Caco-2 (cell line): ENCODE measurements at regions of chr11 and their contacts with region 1.

Region 1: DNA sequence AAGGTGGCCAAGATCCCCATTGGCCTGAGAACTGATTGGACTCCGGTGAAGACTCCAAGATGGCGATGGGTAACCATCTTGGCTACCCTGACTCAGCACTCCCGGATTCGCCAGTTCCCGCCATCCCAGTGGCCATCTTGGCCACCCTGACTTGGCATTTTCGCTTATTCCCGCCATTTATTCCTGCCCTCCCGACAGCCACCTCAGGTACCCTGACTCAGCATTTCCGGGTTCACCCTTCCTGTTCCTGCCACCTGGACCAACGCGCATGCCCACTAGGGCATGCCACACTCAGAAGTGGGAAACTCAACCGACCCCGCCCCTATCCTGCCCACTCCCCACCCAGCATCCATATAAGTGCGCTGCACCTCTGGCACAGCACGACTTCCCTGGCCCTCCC is 7.8 kb downstream of the OR8K5 start:
- DNase-seq: no peak
- H3K4me3 ChIP-seq: no peak overlapping the region
- H3K4me3 Mint-ChIP-seq: no peak overlapping the region
- H3K27ac Mint-ChIP-seq: no peak overlapping the region
- H3K4me1 ChIP-seq: peaks cover 13% of the 10 kb centered on the region
- H3K4me1 Mint-ChIP-seq: peaks cover 12% of the 10 kb centered on the region
- H3K27me3 ChIP-seq: no peaks in the 10 kb centered on the region
- H3K27me3 Mint-ChIP-seq: no peaks in the 10 kb centered on the region
- CTCF ChIP-seq: no peak

Region 2: GRCh38 chr11:56172256-56172830 is 20.0 kb after region 1 on chr11:
- CTCF ChIA-PET with region 1: no interaction called
- POLR2A ChIA-PET with region 1: no interaction called
- intact Hi-C with region 1: loop called (anchors 1 kb)
- DNase-seq: peak; percentile 15 to 37
- H3K4me3 ChIP-seq: no peak overlapping the region
- H3K4me3 Mint-ChIP-seq: no peak overlapping the region
- H3K27ac Mint-ChIP-seq: no peak overlapping the region
- H3K4me1 ChIP-seq: peaks cover 14% of the 10 kb centered on the region
- H3K4me1 Mint-ChIP-seq: no peaks in the 10 kb centered on the region
- H3K27me3 ChIP-seq: no peaks in the 10 kb centered on the region
- H3K27me3 Mint-ChIP-seq: no peaks in the 10 kb centered on the region
- CTCF ChIP-seq: no peak